ENCODE measurements at regions of chr11 and their contacts with region 1.

Region 1: GRCh38 chr11:114180301-114181055 is 115.7 kb upstream of the NNMT start:
- DNase-seq: peak; percentile 77 to 78
- ATAC-seq: peak; percentile 79

Region 2: DNA sequence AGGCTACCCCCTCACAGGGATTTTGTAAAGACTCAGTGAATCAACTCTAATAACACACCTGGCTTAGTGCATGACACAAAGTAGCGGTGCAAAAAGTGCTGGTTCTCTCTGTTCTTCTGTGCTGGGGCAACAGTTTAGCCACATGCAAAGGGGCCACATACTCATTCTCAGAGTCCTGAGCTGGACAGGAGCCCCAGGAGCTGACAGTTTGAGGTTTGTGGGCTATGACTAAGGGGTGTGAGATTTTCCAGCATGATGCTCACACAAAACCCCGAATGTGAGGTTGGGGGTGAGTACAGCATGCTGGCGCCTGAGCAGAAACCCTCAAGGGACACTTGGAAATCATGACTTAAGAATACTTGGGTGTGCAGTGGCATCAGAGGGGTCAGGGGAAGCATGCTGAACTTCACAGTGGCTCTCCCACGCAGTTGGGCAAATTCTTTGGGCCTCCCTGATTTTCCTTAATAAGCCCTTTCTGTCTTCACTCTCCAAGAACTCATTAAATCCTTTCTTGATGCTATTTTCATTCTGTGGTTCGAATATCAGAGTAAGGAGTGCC is 505.4 kb before region 1 on chr11:
- intact Hi-C with region 1: no loop called
- DNase-seq: no peak
- ATAC-seq: no peak

Region 3: DNA sequence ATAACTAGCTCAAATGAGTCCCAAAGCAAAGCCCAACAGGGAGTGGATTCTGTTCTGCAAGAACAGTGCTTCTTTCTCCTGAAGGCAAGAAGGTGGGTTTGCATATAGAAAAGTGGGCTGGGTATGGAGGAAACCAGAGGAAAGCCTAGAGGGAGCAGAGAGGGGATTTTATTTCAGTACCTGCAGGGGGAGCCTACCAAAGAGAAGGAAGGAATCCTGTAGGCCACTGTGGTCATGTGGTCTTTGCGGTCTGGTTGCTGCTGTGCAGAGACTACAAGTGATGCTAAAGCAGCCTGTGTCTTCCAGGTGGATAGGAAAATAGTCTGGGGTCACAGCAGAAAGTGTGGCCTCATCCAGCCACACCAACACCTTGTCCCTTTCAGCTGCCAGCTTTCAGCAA is 154.1 kb before region 1 on chr11:
- intact Hi-C with region 1: no loop called
- DNase-seq: no peak
- ATAC-seq: no peak

Region 4: DNA sequence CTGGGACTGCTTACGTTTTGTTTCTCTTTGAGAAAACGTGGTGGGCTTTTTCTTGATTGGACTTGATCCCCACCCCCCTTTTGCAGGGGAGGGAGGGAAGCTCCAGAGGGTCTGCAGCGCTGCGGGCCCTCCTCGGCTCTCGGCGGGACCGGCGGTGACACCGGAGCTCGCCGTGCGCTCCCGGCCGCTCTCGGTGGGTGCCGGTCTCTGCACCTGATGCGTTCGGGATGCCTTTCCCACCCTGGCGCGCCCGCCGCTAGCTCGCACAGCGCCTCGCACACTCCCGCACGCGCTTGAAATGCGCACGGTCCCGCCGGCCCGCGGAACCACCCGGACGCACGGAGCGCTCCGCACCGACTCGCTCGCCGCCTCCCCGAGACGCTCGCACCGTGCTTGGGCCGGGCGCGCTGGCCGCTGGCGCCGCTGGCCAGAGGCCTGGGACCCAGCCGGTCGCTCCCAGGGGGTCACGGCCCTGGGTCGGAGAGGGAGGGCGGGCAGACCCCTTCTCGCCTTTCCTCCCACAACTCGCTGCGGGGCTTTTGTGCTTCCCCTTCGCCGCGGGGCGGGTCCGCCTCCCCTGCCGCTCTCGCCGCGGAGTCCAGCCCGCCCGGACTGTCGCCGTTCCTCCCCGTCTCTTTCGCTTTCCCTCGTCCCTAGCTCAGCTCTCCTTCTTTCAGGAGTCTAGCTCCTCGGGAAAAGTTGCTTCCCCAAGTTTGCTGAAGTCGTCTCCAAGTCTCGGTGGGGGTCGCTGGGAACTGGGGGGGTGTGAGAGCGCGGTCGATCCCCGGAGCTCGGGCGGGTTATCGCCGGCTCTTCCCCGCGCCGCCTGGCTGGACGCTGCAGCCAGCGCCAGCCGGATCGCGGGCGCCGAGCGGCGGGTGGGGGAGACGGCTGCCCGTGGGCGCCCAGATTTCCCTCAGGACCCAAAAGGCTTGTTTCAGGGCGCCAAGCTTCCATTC is 119.8 kb before region 1 on chr11:
- intact Hi-C with region 1: loop called in 1 of 2 experiments (anchors 5 kb)
- DNase-seq: peak in 1 of 2 donors; percentile 61
- ATAC-seq: peak; percentile 59

Region 5: GRCh38 chr11:114075891-114076441 is 104.5 kb before region 1 on chr11:
- intact Hi-C with region 1: no loop called
- DNase-seq: no peak
- ATAC-seq: no peak

Region 6: GRCh38 chr11:114121804-114122504 is 58.5 kb before region 1 on chr11:
- intact Hi-C with region 1: no loop called
- DNase-seq: peak in 1 of 2 donors; percentile 14
- ATAC-seq: peak; percentile 63

Measured in left colon (tissue), 2 donors.